HepG2 (cell line): ENCODE measurements at regions of chr2 and their contacts with region 1.

Region 1: DNA sequence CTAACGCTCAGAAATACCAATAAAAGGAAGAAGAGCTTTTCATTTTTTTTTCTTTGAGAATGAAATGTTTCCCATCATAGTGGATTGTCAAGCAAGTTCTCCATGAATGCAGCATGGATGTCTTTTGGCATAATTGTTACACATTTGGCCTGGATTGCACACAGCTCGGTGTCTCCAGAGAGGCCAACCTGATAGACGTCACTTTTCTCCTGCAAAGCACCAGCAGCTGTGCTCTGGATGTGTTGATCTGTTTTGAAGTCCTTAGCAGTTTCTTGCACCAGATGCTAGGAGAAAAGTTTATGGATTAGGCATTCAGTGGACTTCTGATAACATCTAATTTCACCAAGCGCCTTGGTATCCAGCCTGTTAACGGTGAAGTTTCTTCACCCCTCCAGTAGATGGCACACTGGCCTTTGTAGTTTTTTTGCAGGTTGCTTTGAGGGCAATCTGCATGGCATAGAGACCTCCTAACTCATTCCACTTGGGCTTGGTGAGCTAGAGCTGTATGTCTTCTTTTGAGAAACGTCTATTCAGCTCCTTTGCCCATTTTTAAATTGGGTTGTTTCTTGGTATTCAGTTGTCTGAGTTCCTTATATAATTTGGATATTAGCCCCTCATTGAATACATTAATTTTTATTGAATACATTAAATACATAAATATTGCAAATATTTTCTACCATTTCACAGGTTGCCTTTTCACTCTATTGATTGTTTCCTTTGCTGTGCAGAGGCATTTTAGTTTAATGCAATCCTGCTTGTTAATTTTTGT is 59.7 kb downstream of the PTH2R start:
- DNase-seq: peak; percentile 61
- ATAC-seq: peak; percentile 95
- H3K4me3 ChIP-seq: no peak overlapping the region
- H3K27ac ChIP-seq: no peak overlapping the region
- H3K4me1 ChIP-seq: no peaks in the 10 kb centered on the region
- H3K27me3 ChIP-seq: no peaks in the 10 kb centered on the region
- CTCF ChIP-seq: peak; percentile 86
- EP300 ChIP-seq: no peak
- POLR2A ChIP-seq: no peak
- RAD21 ChIP-seq: peak; percentile 76

Region 2: DNA sequence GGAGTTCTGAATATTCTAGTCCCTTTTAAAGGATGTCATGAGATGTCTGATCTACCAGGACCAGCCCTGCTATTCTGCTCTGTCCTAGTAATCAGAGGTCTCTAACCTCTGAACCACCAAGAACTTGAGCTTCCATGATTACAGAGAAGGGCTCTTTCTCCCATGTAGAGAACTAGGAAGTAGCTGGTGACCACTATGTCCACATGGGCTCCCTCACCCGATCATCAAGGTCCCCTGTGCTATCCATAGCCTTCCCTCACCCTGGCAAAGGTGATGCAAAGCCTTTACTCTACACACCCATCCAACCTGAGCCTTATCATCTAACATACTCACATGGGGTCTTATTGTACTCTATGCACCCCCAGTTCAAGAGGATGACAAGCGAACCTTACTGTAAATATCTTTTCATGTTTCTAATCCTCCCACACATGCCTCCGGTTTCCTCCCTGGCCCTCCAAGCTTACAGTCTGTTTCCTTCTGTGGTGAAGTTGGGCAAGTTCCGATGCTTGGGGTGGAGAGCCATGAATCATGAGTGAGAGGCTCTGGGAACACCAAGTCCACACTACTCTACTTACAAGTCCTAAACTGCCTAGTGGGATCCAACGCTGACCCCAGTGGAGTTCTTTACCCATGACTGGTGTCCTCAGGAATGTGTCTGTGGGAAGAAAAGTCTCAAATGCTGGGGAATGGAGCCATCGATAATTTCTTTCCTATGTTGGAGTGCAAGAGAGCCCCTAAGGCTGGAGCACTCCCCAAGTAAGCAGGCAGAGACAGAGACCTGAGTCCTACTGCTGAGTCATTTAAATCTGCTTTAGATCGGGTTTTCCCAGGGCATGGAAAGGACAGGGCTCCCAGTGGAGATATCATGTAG is 1227.3 kb before region 1 on chr2:
- CTCF ChIA-PET with region 1: no interaction called
- POLR2A ChIA-PET with region 1: no interaction called
- in situ Hi-C with region 1: no loop called
- intact Hi-C with region 1: no loop called
- DNase-seq: no peak
- ATAC-seq: no peak
- H3K4me3 ChIP-seq: no peak overlapping the region
- H3K27ac ChIP-seq: no peak overlapping the region
- H3K4me1 ChIP-seq: no peaks in the 10 kb centered on the region
- H3K27me3 ChIP-seq: 0 out of 5 replicates have a peak, but pooled peaks cover 0 to 4% of the 10 kb centered on the region in 2 experiments
- CTCF ChIP-seq: no peak
- EP300 ChIP-seq: no peak
- POLR2A ChIP-seq: no peak
- RAD21 ChIP-seq: no peak

Region 3: GRCh38 chr2:208294482-208295024 is 171.8 kb before region 1 on chr2:
- CTCF ChIA-PET with region 1: no interaction called
- POLR2A ChIA-PET with region 1: no interaction called
- in situ Hi-C with region 1: no loop called
- intact Hi-C with region 1: no loop called
- DNase-seq: no peak
- ATAC-seq: no peak
- H3K4me3 ChIP-seq: no peak overlapping the region
- H3K27ac ChIP-seq: no peak overlapping the region
- H3K4me1 ChIP-seq: peaks cover 25% of the 10 kb centered on the region
- H3K27me3 ChIP-seq: no peaks in the 10 kb centered on the region
- CTCF ChIP-seq: no peak
- EP300 ChIP-seq: no peak
- POLR2A ChIP-seq: no peak
- RAD21 ChIP-seq: no peak

Region 4: DNA sequence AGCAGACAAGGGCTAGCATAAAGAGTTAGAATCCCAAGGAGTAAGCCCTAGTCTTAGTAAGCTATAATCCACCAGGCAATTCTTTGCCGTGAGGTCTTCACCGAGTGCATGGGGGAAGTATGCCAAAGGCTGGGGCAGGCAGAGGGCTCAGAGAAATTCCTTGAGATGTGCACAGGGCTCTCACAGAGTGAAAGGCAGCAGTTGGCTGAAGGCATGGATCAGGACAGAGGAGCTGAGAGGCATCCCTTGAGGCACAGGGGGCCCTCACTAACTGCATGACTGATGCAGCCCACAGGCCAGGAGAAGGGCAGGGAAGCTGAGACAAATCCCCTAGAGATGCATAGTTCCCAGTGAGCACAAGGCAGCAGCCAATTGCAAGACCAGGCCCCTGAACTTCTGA is 25.6 kb before region 1 on chr2:
- CTCF ChIA-PET with region 1: no interaction called
- POLR2A ChIA-PET with region 1: no interaction called
- in situ Hi-C with region 1: no loop called
- intact Hi-C with region 1: no loop called
- DNase-seq: no peak
- ATAC-seq: no peak; the same call in 2 of the 3 replicates
- H3K4me3 ChIP-seq: no peak overlapping the region
- H3K27ac ChIP-seq: no peak overlapping the region
- H3K4me1 ChIP-seq: no peaks in the 10 kb centered on the region
- H3K27me3 ChIP-seq: no peaks in the 10 kb centered on the region
- CTCF ChIP-seq: no peak
- EP300 ChIP-seq: no peak
- POLR2A ChIP-seq: no peak
- RAD21 ChIP-seq: no peak

Region 5: GRCh38 chr2:208570851-208571764 is 104.8 kb after region 1 on chr2:
- CTCF ChIA-PET with region 1: no interaction called
- POLR2A ChIA-PET with region 1: no interaction called
- in situ Hi-C with region 1: no loop called
- intact Hi-C with region 1: loop called (anchors 1 kb)
- DNase-seq: no peak
- ATAC-seq: peak; percentile 69
- H3K4me3 ChIP-seq: no peak overlapping the region
- H3K27ac ChIP-seq: no peak overlapping the region
- H3K4me1 ChIP-seq: no peaks in the 10 kb centered on the region
- H3K27me3 ChIP-seq: peaks cover 0 to 3% of the 10 kb centered on the region in 2 experiments; a peak in 1 of 5 replicates
- CTCF ChIP-seq: no peak
- EP300 ChIP-seq: no peak
- POLR2A ChIP-seq: no peak
- RAD21 ChIP-seq: no peak